ENCODE measurements at regions of chr6 and their contacts with region 1.

Region 1: GRCh38 chr6:135021310-135022049 is 33.1 kb downstream of the HBS1L start:
- H3K4me3 Mint-ChIP-seq: no peak overlapping the region
- H3K27ac Mint-ChIP-seq: no peak overlapping the region
- H3K4me1 Mint-ChIP-seq: peaks cover 9% of the 10 kb centered on the region
- H3K27me3 Mint-ChIP-seq: no peaks in the 10 kb centered on the region

Region 2: GRCh38 chr6:135423649-135424128 is 402.2 kb after region 1 on chr6:
- intact Hi-C with region 1: loop called (anchors 10 kb)
- H3K4me3 Mint-ChIP-seq: no peak overlapping the region
- H3K27ac Mint-ChIP-seq: no peak overlapping the region
- H3K4me1 Mint-ChIP-seq: no peaks in the 10 kb centered on the region
- H3K27me3 Mint-ChIP-seq: no peaks in the 10 kb centered on the region

Region 3: DNA sequence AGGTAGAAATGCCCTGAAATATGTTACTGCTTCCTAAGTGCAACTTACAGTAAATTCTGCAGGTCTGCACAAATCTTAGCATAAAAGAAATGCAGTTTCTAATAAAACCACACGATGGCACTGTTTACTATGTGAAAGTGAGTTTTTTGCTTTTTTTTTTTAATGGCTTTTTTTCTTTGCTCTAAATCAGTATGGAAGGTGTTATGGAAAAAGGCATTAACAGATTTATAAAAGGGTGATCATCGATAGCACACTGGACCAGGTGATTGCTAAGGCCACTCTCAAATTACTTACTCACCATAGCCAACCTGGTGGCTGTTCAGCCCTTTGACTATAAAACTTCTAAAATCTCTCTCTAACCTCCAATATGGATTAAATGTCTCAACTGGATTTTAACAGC is 430.2 kb after region 1 on chr6:
- intact Hi-C with region 1: no loop called
- H3K4me3 Mint-ChIP-seq: no peak overlapping the region
- H3K27ac Mint-ChIP-seq: no peak overlapping the region
- H3K4me1 Mint-ChIP-seq: no peaks in the 10 kb centered on the region
- H3K27me3 Mint-ChIP-seq: no peaks in the 10 kb centered on the region

Measured in dendritic cell treated with granulocyte-macrophage colony-stimulating factor and Interleukin-4, amounts not matched to agents 40 ng/mL and 50 ng/mL, for 4 days (primary cell).